ENCODE measurements at regions of chr5 and their contacts with region 1.

Region 1: DNA sequence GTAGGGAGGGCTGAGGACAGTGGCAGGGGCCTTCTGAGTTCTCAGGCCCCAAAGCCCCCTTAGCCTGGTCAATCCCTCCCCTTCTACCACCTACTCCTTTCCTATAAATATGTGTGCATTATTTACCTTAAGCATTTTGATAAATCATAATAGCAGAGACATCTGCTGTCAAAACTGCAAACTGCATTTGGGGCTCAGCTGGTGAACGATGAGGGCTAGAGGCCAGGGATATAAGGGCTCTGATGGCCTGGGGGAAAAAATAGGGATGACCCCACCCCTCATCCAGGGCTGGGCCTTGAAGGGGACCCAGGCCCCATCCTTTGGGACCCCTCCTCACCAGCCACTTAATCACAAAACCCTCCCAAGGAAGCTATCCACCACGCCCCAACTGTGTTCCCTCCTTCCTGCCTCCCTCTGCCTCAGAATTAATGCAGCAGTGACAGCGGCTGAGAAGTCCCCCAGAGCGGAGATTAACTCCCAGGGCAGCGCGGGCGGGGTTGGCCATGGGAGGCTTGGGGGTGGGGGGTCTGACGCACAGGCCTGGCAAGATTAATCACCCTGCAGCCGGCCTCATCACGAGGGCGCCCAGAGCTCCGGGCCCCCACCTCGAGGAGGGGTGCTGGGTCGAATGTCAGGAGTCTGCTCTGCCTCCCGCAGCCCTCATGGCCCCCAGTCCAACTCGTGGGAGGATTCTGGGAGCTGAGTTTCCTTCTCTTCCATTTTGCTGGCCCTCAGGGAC is 42.1 kb downstream of the CXXC5 start:
- DNase-seq: no peak
- H3K4me3 ChIP-seq: no peak overlapping the region
- H3K27ac ChIP-seq: no peak overlapping the region
- H3K4me1 ChIP-seq: peaks cover 27 to 51% (median 43%) of the 10 kb centered on the region in 4 experiments
- H3K27me3 ChIP-seq: peaks cover 0 to 5% (median 0%) of the 10 kb centered on the region in 4 experiments; a peak in 3 of 7 replicates
- CTCF ChIP-seq: no peak
- EP300 ChIP-seq: no peak
- POLR2A ChIP-seq: no peak
- RAD21 ChIP-seq: 0 out of 4 replicates have a peak, but pooled peaks of 1 of the 2 experiments have one; percentile 19

Region 2: GRCh38 chr5:139341650-139342422 is 348.4 kb before region 1 on chr5 and contains the start of gene PAIP2:
- CTCF ChIA-PET with region 1: no interaction called
- POLR2A ChIA-PET with region 1: no interaction called
- DNase-seq: peak; percentile 92 to 97
- H3K4me3 ChIP-seq: peak within 1 kb of the TSS; percentile 82 to 94 (median 88)
- H3K27ac ChIP-seq: peak within 1 kb of the TSS; percentile 99
- H3K4me1 ChIP-seq: peaks cover 0 to 7% (median under 1%) of the 10 kb centered on the region in 4 experiments; a peak in 4 of 7 replicates
- H3K27me3 ChIP-seq: no peaks in the 10 kb centered on the region
- CTCF ChIP-seq: peak; percentile 65 to 89 (median 77)
- EP300 ChIP-seq: peak in 1 of 2 experiments; percentile 56; a peak in 1 of 3 replicates
- POLR2A ChIP-seq: peak; percentile 95 to 96
- RAD21 ChIP-seq: peak; percentile 36 to 49
- total RNA-seq, gene PAIP2: 157 and 162 TPM in 2 replicates

Region 3: DNA sequence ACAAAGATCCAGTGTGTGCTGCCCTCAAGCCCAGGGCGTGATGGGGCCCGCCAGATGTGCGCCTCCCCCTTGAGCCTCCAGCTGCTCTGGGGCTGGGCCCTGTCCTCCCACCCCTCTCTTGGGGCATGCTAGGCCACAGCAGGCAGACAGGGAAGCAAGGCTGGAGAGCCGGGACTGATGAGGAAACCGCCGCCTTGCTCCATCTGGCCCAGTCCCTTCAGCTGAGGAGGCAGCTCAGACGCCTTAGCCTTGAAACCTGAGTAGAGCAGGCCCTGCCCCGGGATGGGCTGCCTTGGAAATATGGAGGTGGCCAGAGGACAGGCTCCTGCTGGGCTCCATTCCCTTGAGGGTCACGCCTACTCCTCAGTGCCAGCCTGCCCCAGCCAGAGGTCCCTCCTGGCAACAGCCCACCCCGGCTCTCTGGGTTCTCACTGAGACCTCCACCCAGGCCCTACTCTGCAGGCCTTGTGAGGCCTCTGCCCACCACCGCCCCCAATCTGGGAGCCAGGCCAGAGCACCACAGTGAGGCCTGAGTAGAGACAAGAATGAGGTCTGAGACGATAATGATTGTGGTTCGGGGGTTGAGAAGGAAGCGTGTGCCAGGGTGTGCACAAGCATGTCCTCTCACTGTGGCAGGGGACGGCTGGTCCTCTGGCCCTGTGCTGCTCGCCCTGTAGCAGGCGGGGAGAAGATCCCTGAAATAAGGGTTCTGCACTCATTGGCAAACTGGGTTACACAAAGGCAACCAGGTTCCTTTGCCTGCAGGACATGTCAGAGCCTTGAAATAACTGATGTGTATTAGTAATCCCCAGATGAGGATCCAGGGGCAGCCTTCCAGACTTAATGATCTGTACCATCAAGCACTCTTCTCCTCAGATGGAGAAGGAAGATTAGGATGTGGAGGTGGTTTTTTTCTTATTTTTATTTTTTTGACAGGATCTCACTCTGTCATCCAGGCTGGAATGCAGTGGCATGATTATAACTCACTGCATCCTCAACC is 11.2 kb before region 1 on chr5:
- CTCF ChIA-PET with region 1: interaction called, 22 read pairs
- POLR2A ChIA-PET with region 1: interaction called, 20 read pairs
- DNase-seq: no peak
- H3K4me3 ChIP-seq: no peak overlapping the region
- H3K27ac ChIP-seq: no peak overlapping the region
- H3K4me1 ChIP-seq: peaks cover 8 to 43% (median 26%) of the 10 kb centered on the region in 4 experiments
- H3K27me3 ChIP-seq: no peaks in the 10 kb centered on the region
- CTCF ChIP-seq: no peak
- EP300 ChIP-seq: no peak
- POLR2A ChIP-seq: no peak
- RAD21 ChIP-seq: no peak

Region 4: GRCh38 chr5:139723986-139724587 is 33.9 kb after region 1 on chr5:
- CTCF ChIA-PET with region 1: no interaction called
- POLR2A ChIA-PET with region 1: no interaction called
- DNase-seq: no peak
- H3K4me3 ChIP-seq: no peak overlapping the region
- H3K27ac ChIP-seq: no peak overlapping the region
- H3K4me1 ChIP-seq: no peaks in the 10 kb centered on the region
- H3K27me3 ChIP-seq: no peaks in the 10 kb centered on the region
- CTCF ChIP-seq: no peak
- EP300 ChIP-seq: no peak
- POLR2A ChIP-seq: no peak
- RAD21 ChIP-seq: no peak

Region 5: GRCh38 chr5:139797856-139798510 is 107.8 kb after region 1 on chr5:
- CTCF ChIA-PET with region 1: no interaction called
- POLR2A ChIA-PET with region 1: no interaction called
- DNase-seq: no peak
- H3K4me3 ChIP-seq: no peak overlapping the region
- H3K27ac ChIP-seq: no peak overlapping the region
- H3K4me1 ChIP-seq: peaks cover 2 to 7% (median 2%) of the 10 kb centered on the region in 4 experiments; a peak in 3 of 7 replicates
- H3K27me3 ChIP-seq: peaks cover 41 to 64% (median 58%) of the 10 kb centered on the region in 4 experiments
- CTCF ChIP-seq: no peak
- EP300 ChIP-seq: no peak
- POLR2A ChIP-seq: no peak
- RAD21 ChIP-seq: no peak

Measured in H1 (cell line).